AG04449 (cell line): ENCODE measurements at regions of chr14 and their contacts with region 1.

Region 1: GRCh38 chr14:99884834-99885648 is 91.8 kb downstream of the EML1 start:
- DNase-seq: no peak
- H3K4me3 ChIP-seq: no peak overlapping the region
- CTCF ChIP-seq: peak; percentile 42

Region 2: GRCh38 chr14:99744199-99744879 is 140.7 kb before region 1 on chr14:
- CTCF ChIA-PET with region 1: interaction called, 12 read pairs
- POLR2A ChIA-PET with region 1: no interaction called
- DNase-seq: no peak
- H3K4me3 ChIP-seq: no peak overlapping the region
- CTCF ChIP-seq: no peak

Region 3: GRCh38 chr14:99768381-99768780 is 116.7 kb before region 1 on chr14:
- CTCF ChIA-PET with region 1: no interaction called
- POLR2A ChIA-PET with region 1: no interaction called
- DNase-seq: no peak
- H3K4me3 ChIP-seq: no peak overlapping the region
- CTCF ChIP-seq: no peak

Region 4: GRCh38 chr14:100012402-100013327 is 127.6 kb after region 1 on chr14:
- CTCF ChIA-PET with region 1: no interaction called
- POLR2A ChIA-PET with region 1: no interaction called
- DNase-seq: no peak
- H3K4me3 ChIP-seq: no peak overlapping the region
- CTCF ChIP-seq: no peak